ENCODE measurements at regions of chr16 and their contacts with region 1.

Region 1: DNA sequence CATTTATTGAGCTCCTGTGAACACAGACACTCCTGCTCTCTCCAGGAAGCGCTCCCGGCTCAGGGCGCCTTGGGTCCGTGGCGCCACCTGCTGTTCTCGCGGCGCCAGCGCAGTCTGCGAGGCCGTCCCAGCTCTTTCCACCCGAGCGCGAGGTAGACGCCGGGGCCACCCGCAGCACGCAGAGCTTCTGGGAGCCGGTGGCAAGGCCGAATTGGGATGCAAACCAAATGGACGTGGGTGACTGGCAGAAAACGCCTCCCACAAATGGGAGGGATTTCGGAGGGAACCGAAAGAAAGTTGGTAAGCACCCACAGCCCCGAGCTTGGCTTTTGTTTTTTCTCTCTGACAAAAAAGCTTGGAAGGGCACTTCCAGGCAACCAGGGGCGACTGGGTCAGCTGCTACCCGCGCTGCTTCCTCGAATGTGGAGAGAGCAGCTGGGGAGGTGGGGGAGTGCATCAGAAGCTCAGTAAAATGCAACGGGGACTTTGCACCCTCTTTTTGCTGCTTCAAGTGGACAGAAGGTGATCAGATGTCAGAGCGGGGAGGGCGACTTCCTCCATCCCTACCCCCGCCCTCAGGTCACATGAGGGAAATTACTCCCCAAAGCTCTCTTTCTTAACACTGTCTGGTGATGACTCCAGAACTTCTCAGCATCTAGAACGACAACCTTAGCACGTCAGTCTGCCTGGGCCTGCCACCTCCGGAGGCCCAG is 13.5 kb upstream of the N4BP1 start:
- DNase-seq: peak; percentile 71 to 91 (median 78)
- ATAC-seq: peak; percentile 96
- H3K4me3 ChIP-seq: peak overlapping the region; percentile 53 to 55
- H3K4me3 Mint-ChIP-seq: peak overlapping the region; percentile 84
- H3K27ac ChIP-seq: no peak overlapping the region
- H3K27ac Mint-ChIP-seq: peak overlapping the region; percentile 76
- H3K4me1 ChIP-seq: peaks cover 23% of the 10 kb centered on the region
- H3K4me1 Mint-ChIP-seq: peaks cover 32% of the 10 kb centered on the region
- H3K27me3 ChIP-seq: no peaks in the 10 kb centered on the region
- H3K27me3 Mint-ChIP-seq: no peaks in the 10 kb centered on the region
- CTCF ChIP-seq: peak; percentile 99

Region 2: DNA sequence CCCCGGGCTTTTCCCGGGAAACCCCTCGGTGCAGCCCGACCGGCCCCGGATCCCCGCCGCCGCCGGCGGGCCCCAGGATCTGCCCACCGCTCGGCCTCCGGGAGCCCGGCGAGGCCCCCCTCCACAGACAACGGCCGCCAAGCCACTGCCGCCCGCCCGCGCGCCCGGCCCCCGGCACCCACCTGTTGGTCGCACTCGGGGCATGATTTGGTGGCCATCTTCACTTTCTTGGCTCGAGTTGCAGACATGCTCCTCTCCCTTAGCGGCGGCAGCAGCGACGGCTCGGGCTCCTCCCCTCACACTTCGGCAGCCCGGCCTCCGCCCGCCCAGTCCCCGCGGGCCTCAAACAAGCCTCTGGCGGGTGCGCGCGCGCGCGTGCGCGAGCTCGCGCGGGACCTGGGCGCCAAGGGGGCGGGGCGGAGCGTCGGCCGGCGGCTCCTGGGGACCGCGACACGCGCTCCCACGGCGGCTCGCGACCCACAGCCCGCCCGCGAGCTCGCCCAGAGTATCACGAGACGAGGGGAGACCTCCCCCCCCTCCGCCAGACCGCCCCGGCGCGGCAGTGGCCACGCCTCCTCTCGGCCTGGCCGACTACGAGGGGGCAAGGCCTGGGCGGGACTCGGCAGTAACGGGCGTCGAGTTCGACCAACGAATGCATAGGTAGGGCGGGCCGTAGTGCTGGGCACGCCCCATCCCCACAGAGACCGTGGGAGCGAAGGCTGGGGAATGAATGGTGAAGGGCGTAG is 1792.4 kb before region 1 on chr16 and contains the start of gene C16orf87:
- CTCF ChIA-PET with region 1: no interaction called
- POLR2A ChIA-PET with region 1: no interaction called
- intact Hi-C with region 1: loop called in 1 of 2 experiments (anchors 10 kb)
- DNase-seq: peak; percentile 85 to 96 (median 90)
- ATAC-seq: peak; percentile 92
- H3K4me3 ChIP-seq: peak within 1 kb of the TSS; percentile 61 to 74
- H3K4me3 Mint-ChIP-seq: peak within 1 kb of the TSS; percentile 94
- H3K27ac ChIP-seq: peak within 1 kb of the TSS; percentile 62 to 73
- H3K27ac Mint-ChIP-seq: peak within 1 kb of the TSS; percentile 96
- H3K4me1 ChIP-seq: peaks cover 9% of the 10 kb centered on the region
- H3K4me1 Mint-ChIP-seq: peaks cover 27% of the 10 kb centered on the region
- H3K27me3 ChIP-seq: no peaks in the 10 kb centered on the region
- H3K27me3 Mint-ChIP-seq: no peaks in the 10 kb centered on the region
- CTCF ChIP-seq: no peak
- total RNA-seq, gene C16orf87: 13.9 to 14.0 TPM

Region 3: DNA sequence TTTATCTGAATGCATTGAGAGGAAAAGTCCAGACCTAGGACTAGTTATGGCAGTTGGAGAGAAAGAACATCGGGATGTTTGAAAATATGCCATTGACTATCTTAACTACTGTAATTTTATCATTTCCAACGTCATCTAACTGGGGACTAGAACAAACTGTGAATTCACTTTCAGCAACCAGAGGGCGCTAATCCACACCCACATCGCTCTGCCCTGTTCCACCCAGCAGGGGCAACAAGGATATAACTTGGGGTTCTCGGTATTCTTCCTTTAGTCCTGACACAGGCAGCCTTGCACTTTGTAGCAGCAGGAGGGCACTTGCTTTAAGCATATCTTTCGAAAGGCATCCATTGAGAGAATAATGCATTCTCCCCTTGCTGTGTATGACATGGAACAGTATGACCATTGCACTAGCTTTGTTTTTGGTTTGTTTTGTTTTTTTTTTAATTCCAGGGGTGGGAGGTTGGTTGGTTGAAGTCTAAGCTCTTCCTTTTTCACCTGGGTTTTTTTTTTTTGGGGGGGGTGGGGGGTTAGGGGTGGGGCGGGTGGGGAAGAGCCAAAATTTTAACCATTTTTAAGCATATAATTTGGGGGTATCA is 269.8 kb before region 1 on chr16:
- CTCF ChIA-PET with region 1: interaction called, 114 read pairs
- POLR2A ChIA-PET with region 1: interaction called, 5 read pairs
- intact Hi-C with region 1: loop called (anchors 1 kb)
- DNase-seq: peak; percentile 37 to 88 (median 69)
- ATAC-seq: peak; percentile 97
- H3K4me3 ChIP-seq: no peak overlapping the region
- H3K4me3 Mint-ChIP-seq: no peak overlapping the region
- H3K27ac ChIP-seq: no peak overlapping the region
- H3K27ac Mint-ChIP-seq: peak overlapping the region; percentile 18
- H3K4me1 ChIP-seq: peaks cover 3% of the 10 kb centered on the region
- H3K4me1 Mint-ChIP-seq: peaks cover 8% of the 10 kb centered on the region
- H3K27me3 ChIP-seq: no peaks in the 10 kb centered on the region
- H3K27me3 Mint-ChIP-seq: no peaks in the 10 kb centered on the region
- CTCF ChIP-seq: peak; percentile 92

Region 4: DNA sequence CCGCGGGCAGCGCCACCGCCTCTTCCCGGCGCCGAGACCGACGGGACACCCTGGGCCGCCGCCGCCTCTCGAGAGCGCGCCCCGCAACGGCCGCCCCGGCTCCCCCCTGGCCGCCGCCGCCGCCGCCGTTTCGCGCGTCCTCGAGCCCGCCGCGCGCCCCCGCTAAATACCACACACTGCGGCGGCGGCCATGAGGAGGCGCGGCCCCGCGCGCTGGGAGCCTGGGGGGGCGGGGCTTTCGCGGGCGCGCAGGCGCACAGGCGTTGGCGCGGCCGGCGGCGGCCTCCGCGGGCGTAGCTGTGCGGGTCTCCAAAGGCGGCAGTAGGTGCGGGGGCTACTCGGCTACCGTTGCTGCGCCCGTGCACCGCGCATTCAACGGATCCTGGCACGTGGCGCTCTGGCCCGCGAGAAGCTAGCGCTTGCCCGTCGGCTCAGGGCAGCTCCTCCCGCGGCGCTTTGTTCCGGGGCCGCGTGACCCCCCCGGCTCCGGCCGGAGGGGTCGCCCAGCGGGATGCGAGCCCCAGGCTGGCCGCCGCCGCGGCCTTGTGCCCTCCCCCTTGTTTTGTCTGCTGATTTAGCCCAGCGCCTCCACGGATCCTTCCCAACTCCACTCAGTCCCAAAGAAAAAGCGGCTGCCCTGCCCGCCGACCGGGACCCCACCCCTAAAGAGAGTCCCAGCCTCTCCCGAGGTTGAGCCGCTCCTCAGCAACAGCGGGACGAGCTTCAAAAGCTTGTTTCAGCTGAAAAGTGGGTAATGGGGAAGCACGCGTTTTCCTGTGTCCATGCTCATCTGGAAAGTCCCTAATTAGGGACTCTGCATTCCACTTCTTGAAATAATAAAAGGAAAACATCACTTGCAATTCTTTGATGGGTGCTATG is 237.9 kb before region 1 on chr16 and contains the start of gene SIAH1:
- CTCF ChIA-PET with region 1: interaction called, 13 read pairs
- POLR2A ChIA-PET with region 1: interaction called, 7 read pairs
- intact Hi-C with region 1: no loop called
- DNase-seq: peak; percentile 77 to 94 (median 89)
- ATAC-seq: peak; percentile 84
- H3K4me3 ChIP-seq: peak within 1 kb of the TSS; percentile 63 to 74
- H3K4me3 Mint-ChIP-seq: peak within 1 kb of the TSS; percentile 86
- H3K27ac ChIP-seq: peak within 1 kb of the TSS; percentile 54 to 68
- H3K27ac Mint-ChIP-seq: peak within 1 kb of the TSS; percentile 82
- H3K4me1 ChIP-seq: peaks cover 13% of the 10 kb centered on the region
- H3K4me1 Mint-ChIP-seq: peaks cover 25% of the 10 kb centered on the region
- H3K27me3 ChIP-seq: no peaks in the 10 kb centered on the region
- H3K27me3 Mint-ChIP-seq: no peaks in the 10 kb centered on the region
- CTCF ChIP-seq: no peak
- total RNA-seq, gene SIAH1: 28.1 to 34.8 TPM

Region 5: DNA sequence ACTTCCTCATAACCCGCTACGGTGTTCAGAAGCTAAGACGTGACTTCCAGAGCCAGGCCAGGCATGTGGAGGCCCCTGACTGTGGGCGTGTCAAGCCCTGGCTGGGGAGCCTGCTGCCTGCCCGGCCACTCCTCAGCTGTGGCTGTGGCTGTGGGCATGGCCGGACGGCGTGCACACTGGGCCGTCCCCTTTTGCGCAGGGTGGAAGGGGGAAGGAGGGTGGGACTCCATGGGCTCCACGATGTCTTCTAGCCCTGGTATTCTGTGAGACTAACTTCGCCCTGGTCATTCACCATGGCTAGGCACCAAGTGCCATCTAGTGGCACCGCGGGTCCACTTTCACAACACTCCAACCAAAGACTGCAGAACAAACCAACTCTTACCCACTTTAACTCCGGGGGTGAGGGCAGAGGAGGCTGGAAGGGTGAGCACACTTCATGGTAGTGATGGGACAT is 81.4 kb before region 1 on chr16:
- CTCF ChIA-PET with region 1: interaction called, 25 read pairs
- POLR2A ChIA-PET with region 1: interaction called, 3 read pairs
- intact Hi-C with region 1: loop called in 1 of 2 experiments (anchors 1 kb)
- DNase-seq: peak in 3 of 9 experiments; percentile 37 to 51 (median 47)
- ATAC-seq: peak; percentile 49
- H3K4me3 ChIP-seq: no peak overlapping the region
- H3K4me3 Mint-ChIP-seq: no peak overlapping the region
- H3K27ac ChIP-seq: no peak overlapping the region
- H3K27ac Mint-ChIP-seq: no peak overlapping the region
- H3K4me1 ChIP-seq: peaks cover 9% of the 10 kb centered on the region
- H3K4me1 Mint-ChIP-seq: peaks cover 11% of the 10 kb centered on the region
- H3K27me3 ChIP-seq: no peaks in the 10 kb centered on the region
- H3K27me3 Mint-ChIP-seq: no peaks in the 10 kb centered on the region
- CTCF ChIP-seq: peak; percentile 14

Region 6: GRCh38 chr16:48603647-48604376 is 19.6 kb before region 1 on chr16:
- CTCF ChIA-PET with region 1: interaction called, 110 read pairs
- POLR2A ChIA-PET with region 1: interaction called, 16 read pairs
- intact Hi-C with region 1: loop called (anchors 1 kb)
- DNase-seq: no peak
- ATAC-seq: no peak
- H3K4me3 ChIP-seq: no peak overlapping the region
- H3K4me3 Mint-ChIP-seq: peak overlapping the region; percentile 2
- H3K27ac ChIP-seq: peak overlapping the region in 1 of 2 experiments; percentile 8
- H3K27ac Mint-ChIP-seq: peak overlapping the region; percentile 20
- H3K4me1 ChIP-seq: peaks cover 82% of the 10 kb centered on the region
- H3K4me1 Mint-ChIP-seq: peaks cover 49% of the 10 kb centered on the region
- H3K27me3 ChIP-seq: no peaks in the 10 kb centered on the region
- H3K27me3 Mint-ChIP-seq: no peaks in the 10 kb centered on the region
- CTCF ChIP-seq: no peak